Ovary (tissue), 10 donors: ENCODE measurements at regions of chr1 and their contacts with region 1.

Region 1: GRCh38 chr1:6634371-6635052 is 9.8 kb downstream of the THAP3 start:
- DNase-seq: peak; percentile 39 to 70 (median 53)
- H3K4me3 ChIP-seq: no peak overlapping the region
- H3K27ac ChIP-seq: no peak overlapping the region
- H3K4me1 ChIP-seq: no peaks in the 10 kb centered on the region
- H3K27me3 ChIP-seq: no peaks in the 10 kb centered on the region
- CTCF ChIP-seq: no peak
- EP300 ChIP-seq: no peak
- POLR2A ChIP-seq: no peak

Region 2: GRCh38 chr1:6554031-6554906 is 80.2 kb before region 1 on chr1 and contains the start of gene NOL9:
- intact Hi-C with region 1: loop called in 1 of 4 experiments (anchors 10 kb)
- DNase-seq: peak; percentile 92 to 97 (median 96)
- H3K4me3 ChIP-seq: peak within 1 kb of the TSS; percentile 99
- H3K27ac ChIP-seq: peak within 1 kb of the TSS in 1 of 2 donors; percentile 15
- H3K4me1 ChIP-seq: peaks cover 10% of the 10 kb centered on the region
- H3K27me3 ChIP-seq: no peaks in the 10 kb centered on the region
- CTCF ChIP-seq: peak; percentile 94 to 97 (median 95)
- EP300 ChIP-seq: no peak
- POLR2A ChIP-seq: peak; percentile 36
- total RNA-seq, gene NOL9: 12.6 to 38.9 (median 30.0) TPM

Region 3: GRCh38 chr1:6601049-6601922 is 33.2 kb before region 1 on chr1:
- intact Hi-C with region 1: loop called in 1 of 4 experiments (anchors 5 kb)
- DNase-seq: peak; percentile 77 to 88 (median 80)
- H3K4me3 ChIP-seq: peak overlapping the region; percentile 45
- H3K27ac ChIP-seq: peak overlapping the region; percentile 67 to 99
- H3K4me1 ChIP-seq: peaks cover 25% of the 10 kb centered on the region
- H3K27me3 ChIP-seq: no peaks in the 10 kb centered on the region
- CTCF ChIP-seq: no peak
- EP300 ChIP-seq: no peak
- POLR2A ChIP-seq: peak; percentile 29

Region 4: DNA sequence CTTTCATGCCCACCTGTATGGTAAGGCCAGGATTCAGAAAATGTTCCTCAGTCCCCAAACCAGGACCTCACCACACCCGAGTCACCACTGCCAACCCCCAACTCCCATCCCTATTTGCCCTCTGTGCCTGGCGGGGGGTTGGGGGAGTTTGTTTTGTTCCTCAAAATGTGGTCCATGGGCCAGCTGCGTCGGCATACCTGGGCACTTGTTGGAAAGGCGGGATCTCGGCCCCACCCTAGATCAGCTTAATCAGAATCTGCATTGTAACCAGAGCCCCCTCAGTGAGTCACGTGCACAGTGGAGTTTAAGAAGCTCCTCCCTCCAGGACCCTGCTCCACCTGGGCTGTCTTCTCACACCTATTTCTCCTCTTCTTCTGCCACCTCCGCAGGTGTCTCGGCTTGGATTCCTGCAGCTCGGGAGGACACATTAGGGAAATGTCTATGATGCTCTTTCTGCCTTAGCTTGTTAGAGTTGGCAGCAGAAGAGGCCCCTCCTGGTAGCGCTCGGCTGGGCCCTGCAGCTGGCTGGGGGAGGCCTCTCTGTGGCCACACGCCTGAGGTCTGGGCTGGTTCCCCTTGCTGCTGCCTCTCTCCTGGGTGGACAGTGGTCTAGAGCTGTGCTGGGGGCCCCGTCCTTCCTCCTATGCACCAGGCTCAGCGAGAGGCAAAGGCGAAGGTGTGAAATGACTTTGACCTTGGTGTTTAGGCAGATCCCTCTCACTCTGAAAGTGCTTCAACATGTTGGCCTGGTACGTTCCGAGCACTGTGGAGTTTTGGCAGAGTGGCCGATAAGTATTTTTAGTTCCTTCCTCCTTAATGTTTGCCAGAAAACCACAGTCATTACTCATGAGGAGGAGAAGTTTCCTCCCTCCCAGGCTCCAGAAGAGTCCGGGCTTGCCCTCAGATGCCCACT is 108.9 kb after region 1 on chr1:
- intact Hi-C with region 1: no loop called
- DNase-seq: peak; percentile 45 to 60 (median 51)
- H3K4me3 ChIP-seq: no peak overlapping the region
- H3K27ac ChIP-seq: peak overlapping the region in 1 of 2 donors; percentile 64
- H3K4me1 ChIP-seq: peaks cover 5% of the 10 kb centered on the region
- H3K27me3 ChIP-seq: no peaks in the 10 kb centered on the region
- CTCF ChIP-seq: no peak
- EP300 ChIP-seq: no peak
- POLR2A ChIP-seq: no peak